ENCODE measurements at regions of chr12 and their contacts with region 1.

Region 1: DNA sequence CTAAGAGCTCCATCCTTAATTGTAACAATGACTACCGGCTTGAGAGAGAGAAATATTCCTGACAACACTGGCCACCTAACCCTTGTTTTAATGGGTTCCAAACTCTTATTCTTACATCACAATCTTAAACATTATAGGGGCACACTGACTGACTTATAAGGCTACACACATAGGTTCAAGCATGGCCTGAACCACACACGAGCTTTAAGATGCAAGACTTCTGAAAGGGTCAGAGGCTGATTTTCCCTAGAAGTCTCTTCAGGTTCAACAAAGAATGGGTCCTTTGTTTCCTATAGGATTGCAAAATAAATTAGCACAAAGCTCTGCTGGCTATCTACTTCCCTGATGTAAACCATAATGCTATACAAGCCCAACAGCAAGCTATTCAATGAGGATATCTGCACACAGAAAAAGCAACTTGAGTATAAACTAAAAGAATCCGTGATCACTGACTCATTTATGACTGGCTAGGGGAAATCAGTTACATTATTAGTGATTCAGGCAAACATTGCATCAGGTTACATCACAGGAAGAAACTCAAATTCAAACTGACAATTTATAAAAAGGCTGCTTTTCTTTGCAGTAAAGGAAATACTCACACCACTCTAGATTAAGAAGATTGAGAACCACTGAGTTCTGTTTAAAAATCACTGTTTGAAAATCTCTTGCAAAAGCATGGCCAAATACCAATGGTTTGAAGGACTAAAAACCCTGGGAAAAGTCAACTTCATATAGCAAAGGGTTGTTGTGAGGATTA is 8.5 kb downstream of the BTG1 start:
- DNase-seq: no peak
- ATAC-seq: no peak
- H3K4me3 Mint-ChIP-seq: peak overlapping the region; percentile 100
- H3K27ac Mint-ChIP-seq: peak overlapping the region; percentile 86
- H3K4me1 Mint-ChIP-seq: peaks cover 71% of the 10 kb centered on the region
- H3K27me3 Mint-ChIP-seq: no peaks in the 10 kb centered on the region

Region 2: GRCh38 chr12:92030618-92031017 is 106.5 kb before region 1 on chr12:
- CTCF ChIA-PET with region 1: interaction called, 7 read pairs
- POLR2A ChIA-PET with region 1: interaction called, 13 read pairs
- DNase-seq: peak; percentile 79
- ATAC-seq: peak; percentile 98
- H3K4me3 Mint-ChIP-seq: peak overlapping the region; percentile 72
- H3K27ac Mint-ChIP-seq: peak overlapping the region; percentile 89
- H3K4me1 Mint-ChIP-seq: peaks cover 74% of the 10 kb centered on the region
- H3K27me3 Mint-ChIP-seq: no peaks in the 10 kb centered on the region

Region 3: DNA sequence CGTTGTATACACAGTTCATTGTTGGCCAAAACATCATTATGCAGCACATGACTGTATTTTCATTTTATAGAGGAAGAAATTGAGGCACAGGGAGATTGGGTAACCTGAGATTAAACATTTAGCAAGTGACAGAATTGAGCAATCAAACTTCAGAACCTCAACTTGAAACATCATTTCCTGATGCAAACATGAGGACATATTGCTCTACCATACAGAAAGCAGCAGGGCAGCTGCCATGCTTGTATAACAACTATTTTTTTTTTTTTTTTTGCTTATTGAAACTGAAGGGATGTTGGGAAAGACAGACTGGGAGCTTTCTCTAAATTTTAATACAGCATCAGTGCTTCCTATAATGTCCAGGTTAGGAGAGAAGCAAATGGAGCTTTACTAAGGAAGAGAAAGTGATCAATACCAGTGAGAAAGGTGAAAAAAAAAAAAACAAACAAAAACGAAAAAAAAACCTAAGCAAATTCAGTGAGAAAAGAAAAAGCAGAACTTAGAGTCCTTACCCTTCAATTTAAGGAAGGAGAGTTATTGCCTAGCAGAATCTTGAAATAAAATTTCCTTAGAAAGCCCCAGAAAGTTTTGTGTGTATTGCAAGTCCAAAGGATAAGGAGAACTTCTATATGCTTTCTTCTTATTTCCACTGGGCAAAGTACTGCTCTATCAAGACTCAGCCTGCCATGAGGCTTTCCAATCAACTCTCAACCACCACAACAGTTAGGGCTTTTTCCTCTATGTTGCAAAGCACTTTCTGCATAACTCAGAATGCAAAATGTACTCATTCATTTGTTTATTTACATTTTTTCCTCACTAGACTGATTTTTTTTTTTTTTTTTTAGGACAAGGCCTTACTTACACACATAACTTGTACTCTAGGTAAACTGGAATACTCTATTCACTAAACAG is 13.1 kb before region 1 on chr12:
- CTCF ChIA-PET with region 1: interaction called, 7 read pairs
- POLR2A ChIA-PET with region 1: interaction called, 12 read pairs
- DNase-seq: no peak
- ATAC-seq: peak; percentile 35
- H3K4me3 Mint-ChIP-seq: peak overlapping the region; percentile 37
- H3K27ac Mint-ChIP-seq: peak overlapping the region; percentile 76
- H3K4me1 Mint-ChIP-seq: peaks cover 48% of the 10 kb centered on the region
- H3K27me3 Mint-ChIP-seq: no peaks in the 10 kb centered on the region

Region 4: GRCh38 chr12:92208613-92209121 is 71.5 kb after region 1 on chr12:
- CTCF ChIA-PET with region 1: interaction called, 42 read pairs
- POLR2A ChIA-PET with region 1: interaction called, 11 read pairs
- DNase-seq: peak; percentile 60
- ATAC-seq: peak; percentile 89
- H3K4me3 Mint-ChIP-seq: peak overlapping the region; percentile 51
- H3K27ac Mint-ChIP-seq: peak overlapping the region; percentile 93
- H3K4me1 Mint-ChIP-seq: peaks cover 41% of the 10 kb centered on the region
- H3K27me3 Mint-ChIP-seq: no peaks in the 10 kb centered on the region